CD8-positive, alpha-beta T cell (primary cell): ENCODE measurements at regions of chr16 and their contacts with region 1.

Region 1: GRCh38 chr16:46689365-46690280 is at the start of gene ORC6:
- DNase-seq: peak; percentile 93 to 98 (median 96)
- ATAC-seq: peak; percentile 73
- H3K4me3 ChIP-seq: peak within 1 kb of the TSS; percentile 90 to 98
- H3K4me3 Mint-ChIP-seq: no peak within 1 kb of the TSS
- H3K27ac ChIP-seq: peak within 1 kb of the TSS; percentile 95
- H3K27ac Mint-ChIP-seq: no peak within 1 kb of the TSS
- H3K4me1 ChIP-seq: peaks cover 28% of the 10 kb centered on the region
- H3K4me1 Mint-ChIP-seq: peaks cover 31% of the 10 kb centered on the region
- H3K27me3 ChIP-seq: no peaks in the 10 kb centered on the region
- H3K27me3 Mint-ChIP-seq: no peaks in the 10 kb centered on the region
- CTCF ChIP-seq: peak; percentile 45
- total RNA-seq, gene ORC6: 4.7 to 5.7 TPM

Region 2: DNA sequence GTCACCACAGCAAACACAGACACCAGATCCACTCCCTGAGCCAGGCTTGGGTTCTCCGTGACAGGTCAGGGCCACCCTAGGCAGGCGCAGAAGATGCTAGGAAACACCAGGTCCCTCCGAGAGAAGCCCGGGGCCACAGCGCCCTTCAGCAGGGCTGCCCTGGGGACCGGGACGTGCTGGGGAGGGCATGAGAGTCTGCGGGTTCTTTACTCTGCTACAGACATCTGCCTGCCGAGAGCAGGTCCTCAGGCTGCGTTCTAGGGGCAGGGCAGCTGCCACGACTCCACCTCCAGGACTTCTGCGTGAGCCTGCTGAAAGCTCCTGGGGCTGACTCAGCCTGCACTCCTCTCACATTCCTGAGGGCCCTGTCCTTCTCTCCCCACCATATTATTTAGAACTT is 47.1 kb after region 1 on chr16:
- CTCF ChIA-PET with region 1: no interaction called
- POLR2A ChIA-PET with region 1: no interaction called
- intact Hi-C with region 1: no loop called
- DNase-seq: no peak
- ATAC-seq: no peak
- H3K4me3 ChIP-seq: no peak overlapping the region
- H3K4me3 Mint-ChIP-seq: no peak overlapping the region
- H3K27ac ChIP-seq: no peak overlapping the region
- H3K27ac Mint-ChIP-seq: no peak overlapping the region
- H3K4me1 ChIP-seq: no peaks in the 10 kb centered on the region
- H3K4me1 Mint-ChIP-seq: no peaks in the 10 kb centered on the region
- H3K27me3 ChIP-seq: no peaks in the 10 kb centered on the region
- H3K27me3 Mint-ChIP-seq: no peaks in the 10 kb centered on the region
- CTCF ChIP-seq: no peak

Region 3: GRCh38 chr16:46789499-46790414 is 100.1 kb after region 1 on chr16:
- CTCF ChIA-PET with region 1: no interaction called
- POLR2A ChIA-PET with region 1: interaction called, 3 read pairs
- intact Hi-C with region 1: loop called (anchors 1 to 2 kb)
- DNase-seq: peak; percentile 66 to 86 (median 78)
- ATAC-seq: peak; percentile 98
- H3K4me3 ChIP-seq: peak overlapping the region; percentile 62 to 69
- H3K4me3 Mint-ChIP-seq: peak overlapping the region; percentile 74
- H3K27ac ChIP-seq: peak overlapping the region in 1 of 2 experiments; percentile 6
- H3K27ac Mint-ChIP-seq: peak overlapping the region; percentile 80
- H3K4me1 ChIP-seq: peaks cover 4% of the 10 kb centered on the region
- H3K4me1 Mint-ChIP-seq: peaks cover 18% of the 10 kb centered on the region
- H3K27me3 ChIP-seq: no peaks in the 10 kb centered on the region
- H3K27me3 Mint-ChIP-seq: no peaks in the 10 kb centered on the region
- CTCF ChIP-seq: no peak

Region 4: GRCh38 chr16:46973207-46973995 is 283.8 kb after region 1 on chr16 and contains the start of gene DNAJA2:
- CTCF ChIA-PET with region 1: no interaction called
- POLR2A ChIA-PET with region 1: no interaction called
- intact Hi-C with region 1: loop called (anchors 1 to 2 kb)
- DNase-seq: peak; percentile 84 to 96 (median 93)
- ATAC-seq: peak; percentile 93
- H3K4me3 ChIP-seq: peak within 1 kb of the TSS; percentile 87 to 89
- H3K4me3 Mint-ChIP-seq: peak within 1 kb of the TSS; percentile 92
- H3K27ac ChIP-seq: peak within 1 kb of the TSS; percentile 96 to 98
- H3K27ac Mint-ChIP-seq: peak within 1 kb of the TSS; percentile 100
- H3K4me1 ChIP-seq: peaks cover 45% of the 10 kb centered on the region
- H3K4me1 Mint-ChIP-seq: peaks cover 53% of the 10 kb centered on the region
- H3K27me3 ChIP-seq: no peaks in the 10 kb centered on the region
- H3K27me3 Mint-ChIP-seq: no peaks in the 10 kb centered on the region
- CTCF ChIP-seq: no peak
- total RNA-seq, gene DNAJA2: 82.8 to 83.1 TPM

Region 5: GRCh38 chr16:47141773-47142485 is 452.3 kb after region 1 on chr16:
- CTCF ChIA-PET with region 1: no interaction called
- POLR2A ChIA-PET with region 1: no interaction called
- intact Hi-C with region 1: loop called (anchors 10 kb)
- DNase-seq: peak; percentile 63 to 87 (median 80)
- ATAC-seq: peak; percentile 77
- H3K4me3 ChIP-seq: peak overlapping the region; percentile 3 to 28
- H3K4me3 Mint-ChIP-seq: peak overlapping the region; percentile 76
- H3K27ac ChIP-seq: no peak overlapping the region
- H3K27ac Mint-ChIP-seq: no peak overlapping the region
- H3K4me1 ChIP-seq: peaks cover 12% of the 10 kb centered on the region
- H3K4me1 Mint-ChIP-seq: peaks cover 21% of the 10 kb centered on the region
- H3K27me3 ChIP-seq: peaks cover 3 to 5% of the 10 kb centered on the region in 2 experiments
- H3K27me3 Mint-ChIP-seq: peaks cover 22% of the 10 kb centered on the region
- CTCF ChIP-seq: peak; percentile 85

Region 6: DNA sequence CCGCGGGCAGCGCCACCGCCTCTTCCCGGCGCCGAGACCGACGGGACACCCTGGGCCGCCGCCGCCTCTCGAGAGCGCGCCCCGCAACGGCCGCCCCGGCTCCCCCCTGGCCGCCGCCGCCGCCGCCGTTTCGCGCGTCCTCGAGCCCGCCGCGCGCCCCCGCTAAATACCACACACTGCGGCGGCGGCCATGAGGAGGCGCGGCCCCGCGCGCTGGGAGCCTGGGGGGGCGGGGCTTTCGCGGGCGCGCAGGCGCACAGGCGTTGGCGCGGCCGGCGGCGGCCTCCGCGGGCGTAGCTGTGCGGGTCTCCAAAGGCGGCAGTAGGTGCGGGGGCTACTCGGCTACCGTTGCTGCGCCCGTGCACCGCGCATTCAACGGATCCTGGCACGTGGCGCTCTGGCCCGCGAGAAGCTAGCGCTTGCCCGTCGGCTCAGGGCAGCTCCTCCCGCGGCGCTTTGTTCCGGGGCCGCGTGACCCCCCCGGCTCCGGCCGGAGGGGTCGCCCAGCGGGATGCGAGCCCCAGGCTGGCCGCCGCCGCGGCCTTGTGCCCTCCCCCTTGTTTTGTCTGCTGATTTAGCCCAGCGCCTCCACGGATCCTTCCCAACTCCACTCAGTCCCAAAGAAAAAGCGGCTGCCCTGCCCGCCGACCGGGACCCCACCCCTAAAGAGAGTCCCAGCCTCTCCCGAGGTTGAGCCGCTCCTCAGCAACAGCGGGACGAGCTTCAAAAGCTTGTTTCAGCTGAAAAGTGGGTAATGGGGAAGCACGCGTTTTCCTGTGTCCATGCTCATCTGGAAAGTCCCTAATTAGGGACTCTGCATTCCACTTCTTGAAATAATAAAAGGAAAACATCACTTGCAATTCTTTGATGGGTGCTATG is 1695.9 kb after region 1 on chr16 and contains the start of gene SIAH1:
- CTCF ChIA-PET with region 1: no interaction called
- POLR2A ChIA-PET with region 1: no interaction called
- intact Hi-C with region 1: loop called in 1 of 2 experiments (anchors 10 kb)
- DNase-seq: peak; percentile 77 to 94 (median 89)
- ATAC-seq: peak; percentile 84
- H3K4me3 ChIP-seq: peak within 1 kb of the TSS; percentile 63 to 74
- H3K4me3 Mint-ChIP-seq: peak within 1 kb of the TSS; percentile 86
- H3K27ac ChIP-seq: peak within 1 kb of the TSS; percentile 54 to 68
- H3K27ac Mint-ChIP-seq: peak within 1 kb of the TSS; percentile 82
- H3K4me1 ChIP-seq: peaks cover 13% of the 10 kb centered on the region
- H3K4me1 Mint-ChIP-seq: peaks cover 25% of the 10 kb centered on the region
- H3K27me3 ChIP-seq: no peaks in the 10 kb centered on the region
- H3K27me3 Mint-ChIP-seq: no peaks in the 10 kb centered on the region
- CTCF ChIP-seq: no peak
- total RNA-seq, gene SIAH1: 28.1 to 34.8 TPM